MCF 10A (cell line): ENCODE measurements at regions of chr5 and their contacts with region 1.

Region 1: GRCh38 chr5:134140530-134141201 is 26.2 kb downstream of the TCF7 start:
- DNase-seq: peak; percentile 96
- H3K4me3 Mint-ChIP-seq: no peak overlapping the region
- H3K27ac Mint-ChIP-seq: peak overlapping the region; percentile 60
- H3K4me1 Mint-ChIP-seq: peaks cover 23% of the 10 kb centered on the region
- H3K27me3 Mint-ChIP-seq: no peaks in the 10 kb centered on the region
- CTCF ChIP-seq: peak; percentile 93

Region 2: DNA sequence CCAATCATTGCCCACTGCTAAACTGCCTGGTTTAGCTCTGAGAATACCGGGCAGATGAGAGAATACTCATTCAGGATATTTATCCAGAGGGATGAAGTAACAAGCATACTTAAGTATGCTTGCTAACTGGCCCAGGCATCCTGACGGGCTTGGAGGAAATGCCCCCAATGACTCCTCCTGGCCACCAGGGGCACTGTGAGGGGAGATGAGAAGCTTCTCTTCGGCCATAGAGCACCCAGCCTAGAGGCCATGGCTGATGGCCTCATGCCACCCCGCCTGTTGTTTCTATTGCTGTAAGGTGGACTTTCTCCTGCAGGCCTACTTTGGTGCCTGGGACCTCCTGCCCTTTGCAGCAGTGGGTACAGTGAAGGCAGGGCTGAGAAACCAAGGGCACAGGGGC is 393.8 kb before region 1 on chr5:
- CTCF ChIA-PET with region 1: no interaction called
- POLR2A ChIA-PET with region 1: no interaction called
- intact Hi-C with region 1: no loop called
- DNase-seq: no peak
- H3K4me3 Mint-ChIP-seq: no peak overlapping the region
- H3K27ac Mint-ChIP-seq: no peak overlapping the region
- H3K4me1 Mint-ChIP-seq: no peaks in the 10 kb centered on the region
- H3K27me3 Mint-ChIP-seq: peaks cover 12% of the 10 kb centered on the region
- CTCF ChIP-seq: peak; percentile 38

Region 3: GRCh38 chr5:134026521-134027268 is 114.0 kb before region 1 on chr5:
- CTCF ChIA-PET with region 1: interaction called, 867 read pairs
- POLR2A ChIA-PET with region 1: no interaction called
- intact Hi-C with region 1: loop called (anchors 1 kb)
- DNase-seq: peak; percentile 86
- H3K4me3 Mint-ChIP-seq: no peak overlapping the region
- H3K27ac Mint-ChIP-seq: no peak overlapping the region
- H3K4me1 Mint-ChIP-seq: peaks cover 20% of the 10 kb centered on the region
- H3K27me3 Mint-ChIP-seq: no peaks in the 10 kb centered on the region
- CTCF ChIP-seq: peak; percentile 45

Region 4: GRCh38 chr5:134101686-134102439 is 38.8 kb before region 1 on chr5:
- CTCF ChIA-PET with region 1: interaction called, 3 read pairs
- POLR2A ChIA-PET with region 1: interaction called, 3 read pairs
- intact Hi-C with region 1: loop called (anchors 1 kb)
- DNase-seq: peak; percentile 67
- H3K4me3 Mint-ChIP-seq: no peak overlapping the region
- H3K27ac Mint-ChIP-seq: no peak overlapping the region
- H3K4me1 Mint-ChIP-seq: peaks cover 7% of the 10 kb centered on the region
- H3K27me3 Mint-ChIP-seq: no peaks in the 10 kb centered on the region
- CTCF ChIP-seq: peak; percentile 99

Region 5: GRCh38 chr5:134125039-134126015 is 15.3 kb before region 1 on chr5:
- CTCF ChIA-PET with region 1: interaction called, 56 read pairs
- POLR2A ChIA-PET with region 1: interaction called, 8 read pairs
- intact Hi-C with region 1: no loop called
- DNase-seq: peak; percentile 92
- H3K4me3 Mint-ChIP-seq: no peak overlapping the region
- H3K27ac Mint-ChIP-seq: peak overlapping the region; percentile 8
- H3K4me1 Mint-ChIP-seq: peaks cover 18% of the 10 kb centered on the region
- H3K27me3 Mint-ChIP-seq: no peaks in the 10 kb centered on the region
- CTCF ChIP-seq: no peak

Region 6: DNA sequence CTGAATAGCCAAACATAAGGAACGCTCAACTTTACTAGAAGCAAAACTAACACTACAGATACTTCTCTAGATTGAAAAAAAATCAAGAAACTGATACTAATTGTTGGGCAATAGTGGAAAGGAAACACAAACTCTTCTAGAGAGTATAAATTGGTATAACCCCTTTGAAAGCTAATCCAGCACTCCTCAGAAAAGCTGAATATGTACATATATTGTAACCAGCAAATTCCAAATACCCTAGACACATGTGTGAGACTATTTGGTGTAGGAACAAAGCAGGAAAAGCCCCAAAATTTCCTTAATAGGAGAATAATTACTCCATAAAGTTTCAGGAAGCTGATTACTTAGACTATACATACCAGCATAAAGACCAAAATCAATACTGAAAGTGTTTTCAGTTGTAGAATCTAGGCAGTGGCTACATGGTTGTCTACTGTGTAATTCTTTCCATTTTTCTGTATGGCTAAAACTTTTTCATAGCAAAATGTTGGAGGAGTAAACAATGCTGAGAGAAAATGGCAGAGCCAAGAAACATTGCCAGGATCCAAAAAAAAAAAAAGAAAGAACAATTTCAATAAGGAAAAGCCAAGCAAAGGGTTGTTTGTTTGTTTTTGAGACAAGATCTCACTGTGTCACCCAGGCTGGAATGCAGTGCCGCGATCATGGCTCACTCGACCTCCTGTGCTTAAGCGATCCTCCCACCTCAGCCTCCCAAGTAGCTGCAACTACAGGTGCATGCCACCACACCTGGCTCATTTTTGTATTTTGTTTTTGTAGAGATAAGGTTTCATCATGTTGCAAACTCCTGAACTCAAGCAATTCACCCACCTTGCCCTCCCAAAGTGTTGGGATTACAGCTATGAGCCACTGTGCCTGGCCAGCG is 21.1 kb after region 1 on chr5:
- CTCF ChIA-PET with region 1: interaction called, 21 read pairs
- POLR2A ChIA-PET with region 1: interaction called, 4 read pairs
- intact Hi-C with region 1: no loop called
- DNase-seq: no peak
- H3K4me3 Mint-ChIP-seq: no peak overlapping the region
- H3K27ac Mint-ChIP-seq: no peak overlapping the region
- H3K4me1 Mint-ChIP-seq: peaks cover 11% of the 10 kb centered on the region
- H3K27me3 Mint-ChIP-seq: no peaks in the 10 kb centered on the region
- CTCF ChIP-seq: no peak

Region 7: GRCh38 chr5:134465816-134466240 is 325.2 kb after region 1 on chr5:
- CTCF ChIA-PET with region 1: no interaction called
- POLR2A ChIA-PET with region 1: no interaction called
- intact Hi-C with region 1: no loop called
- DNase-seq: peak; percentile 97
- H3K4me3 Mint-ChIP-seq: peak overlapping the region; percentile 72
- H3K27ac Mint-ChIP-seq: peak overlapping the region; percentile 44
- H3K4me1 Mint-ChIP-seq: peaks cover 42% of the 10 kb centered on the region
- H3K27me3 Mint-ChIP-seq: no peaks in the 10 kb centered on the region
- CTCF ChIP-seq: no peak